Transverse colon (tissue), 4 donors: ENCODE measurements at regions of chr12 and their contacts with region 1.

Region 1: GRCh38 chr12:32761716-32762115 is 6.0 kb upstream of the YARS2 start:
- DNase-seq: no peak
- H3K4me3 ChIP-seq: no peak overlapping the region
- H3K27ac ChIP-seq: no peak overlapping the region
- H3K4me1 ChIP-seq: peaks cover 0 to 2% (median 0%) of the 10 kb centered on the region in 4 donors
- H3K27me3 ChIP-seq: no peaks in the 10 kb centered on the region
- CTCF ChIP-seq: no peak
- EP300 ChIP-seq: no peak
- POLR2A ChIP-seq: no peak

Region 2: GRCh38 chr12:32918890-32919801 is 157.4 kb after region 1 on chr12:
- in situ Hi-C with region 1: loop called in 3 of 4 experiments (anchors 10 to 25 kb)
- intact Hi-C with region 1: no loop called
- DNase-seq: no peak
- H3K4me3 ChIP-seq: no peak overlapping the region
- H3K27ac ChIP-seq: no peak overlapping the region
- H3K4me1 ChIP-seq: peaks cover 0 to 17% (median 0%) of the 10 kb centered on the region in 4 donors
- H3K27me3 ChIP-seq: no peaks in the 10 kb centered on the region
- CTCF ChIP-seq: peak; percentile 38 to 63 (median 47)
- EP300 ChIP-seq: no peak
- POLR2A ChIP-seq: no peak

Region 3: DNA sequence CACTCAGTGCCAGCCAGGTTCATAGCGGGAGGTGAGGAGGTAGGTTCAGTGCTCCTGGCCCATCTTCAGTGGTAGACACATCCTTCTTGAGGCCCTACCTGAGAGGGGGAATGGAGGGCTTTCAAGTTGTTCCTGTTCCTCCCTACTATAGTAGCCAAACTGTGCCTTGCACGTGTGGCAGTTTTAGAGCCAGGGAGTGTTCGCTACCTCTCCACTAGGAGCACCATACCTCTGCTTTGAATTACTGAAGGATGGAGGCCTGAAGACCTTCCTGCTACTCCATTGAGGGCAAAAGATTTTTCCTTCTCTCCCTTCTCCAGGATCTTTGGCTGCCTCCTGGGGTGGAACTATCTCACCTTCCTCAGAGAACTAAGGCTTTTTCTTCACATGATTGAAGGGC is 1254.6 kb after region 1 on chr12:
- in situ Hi-C with region 1: loop called (anchors 10 kb)
- intact Hi-C with region 1: loop called (anchors 5 kb)
- DNase-seq: no peak
- H3K4me3 ChIP-seq: no peak overlapping the region
- H3K27ac ChIP-seq: no peak overlapping the region
- H3K4me1 ChIP-seq: peaks cover 0 to 2% (median under 1%) of the 10 kb centered on the region in 4 donors
- H3K27me3 ChIP-seq: no peaks in the 10 kb centered on the region
- CTCF ChIP-seq: no peak
- EP300 ChIP-seq: no peak
- POLR2A ChIP-seq: no peak